AG04450 (cell line): ENCODE measurements at regions of chr6 and their contacts with region 1.

Region 1: DNA sequence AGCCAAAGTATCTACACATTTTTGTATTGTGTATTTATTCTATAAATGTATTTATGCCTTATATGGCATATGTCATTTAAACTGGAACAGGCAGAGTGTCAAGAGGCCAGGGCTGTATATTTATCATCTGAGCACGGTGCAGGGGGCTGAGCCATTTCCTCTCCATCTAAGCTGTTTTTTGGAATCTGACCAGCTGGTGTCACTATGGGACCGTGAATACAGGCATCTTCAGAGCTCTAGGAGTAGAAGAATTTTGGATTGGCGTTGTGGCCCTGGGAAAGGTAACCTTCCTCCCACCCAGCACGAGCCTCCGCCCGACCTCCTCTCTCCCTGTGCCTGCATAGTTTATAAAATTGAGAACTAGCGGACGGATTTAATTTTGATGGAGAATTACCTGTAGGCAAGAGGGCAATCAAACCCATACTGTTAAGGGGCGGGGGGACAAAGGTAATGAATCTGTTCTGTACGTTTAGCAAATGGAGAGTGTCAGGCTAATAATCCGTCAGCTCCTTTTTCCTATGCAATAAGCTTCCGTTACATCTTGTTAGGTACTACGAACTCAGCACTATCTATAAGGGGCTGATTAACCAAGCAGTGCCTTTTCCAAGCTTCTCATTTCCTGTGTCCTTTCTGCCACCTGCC is 29.0 kb upstream of the EEF1E1 start:
- DNase-seq: peak; percentile 39
- H3K4me3 ChIP-seq: no peak overlapping the region
- H3K27ac ChIP-seq: no peak overlapping the region
- H3K27me3 ChIP-seq: no peaks in the 10 kb centered on the region
- CTCF ChIP-seq: peak; percentile 71

Region 2: GRCh38 chr6:7859591-7859990 is 271.8 kb before region 1 on chr6:
- CTCF ChIA-PET with region 1: no interaction called
- POLR2A ChIA-PET with region 1: no interaction called
- DNase-seq: no peak
- H3K4me3 ChIP-seq: no peak overlapping the region
- H3K27ac ChIP-seq: no peak overlapping the region
- H3K27me3 ChIP-seq: no peaks in the 10 kb centered on the region
- CTCF ChIP-seq: no peak

Region 3: DNA sequence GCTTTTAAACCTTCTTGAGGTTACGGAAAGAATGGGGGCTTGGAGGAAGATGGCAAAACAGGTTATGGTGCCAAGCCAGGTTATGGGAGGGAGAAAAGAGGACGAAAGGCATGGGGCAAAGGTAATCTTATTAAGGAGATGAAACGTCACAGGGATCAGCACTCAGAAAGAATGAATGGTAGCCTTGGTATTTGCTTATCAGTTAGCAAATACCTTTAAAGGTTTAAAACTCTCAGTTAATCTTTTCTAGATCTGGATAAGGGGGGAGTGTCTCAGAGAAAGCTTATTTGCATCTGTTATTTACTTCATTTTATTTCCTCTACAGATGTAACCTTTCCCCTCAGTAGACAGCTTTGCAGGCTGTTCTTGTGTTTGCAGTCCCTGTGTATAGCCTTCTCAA is 26.5 kb after region 1 on chr6:
- CTCF ChIA-PET with region 1: interaction called, 12 read pairs
- POLR2A ChIA-PET with region 1: no interaction called
- DNase-seq: no peak
- H3K4me3 ChIP-seq: no peak overlapping the region
- H3K27ac ChIP-seq: no peak overlapping the region
- H3K27me3 ChIP-seq: no peaks in the 10 kb centered on the region
- CTCF ChIP-seq: no peak

Region 4: DNA sequence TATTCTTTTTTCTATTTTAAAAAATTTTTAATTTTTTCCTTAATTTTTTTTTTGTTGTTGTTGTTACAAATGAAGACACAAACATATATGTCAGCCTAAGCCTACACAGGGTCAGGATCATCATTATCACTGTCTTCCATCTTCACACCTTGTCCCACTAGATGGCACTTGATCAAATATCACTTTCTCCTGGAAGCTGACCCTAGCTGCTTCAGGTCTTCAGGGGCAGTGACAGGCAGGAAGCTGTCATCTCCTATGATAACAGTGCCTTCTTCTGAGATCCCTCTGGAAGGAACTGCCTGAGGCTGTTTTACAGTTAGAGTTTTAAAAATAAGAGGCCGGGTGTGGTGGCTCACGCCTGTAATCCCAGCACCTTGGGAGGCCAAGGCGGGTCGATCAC is 41.2 kb after region 1 on chr6:
- CTCF ChIA-PET with region 1: interaction called, 13 read pairs
- POLR2A ChIA-PET with region 1: interaction called, 5 read pairs
- DNase-seq: no peak
- H3K4me3 ChIP-seq: no peak overlapping the region
- H3K27ac ChIP-seq: no peak overlapping the region
- H3K27me3 ChIP-seq: no peaks in the 10 kb centered on the region
- CTCF ChIP-seq: no peak

Region 5: DNA sequence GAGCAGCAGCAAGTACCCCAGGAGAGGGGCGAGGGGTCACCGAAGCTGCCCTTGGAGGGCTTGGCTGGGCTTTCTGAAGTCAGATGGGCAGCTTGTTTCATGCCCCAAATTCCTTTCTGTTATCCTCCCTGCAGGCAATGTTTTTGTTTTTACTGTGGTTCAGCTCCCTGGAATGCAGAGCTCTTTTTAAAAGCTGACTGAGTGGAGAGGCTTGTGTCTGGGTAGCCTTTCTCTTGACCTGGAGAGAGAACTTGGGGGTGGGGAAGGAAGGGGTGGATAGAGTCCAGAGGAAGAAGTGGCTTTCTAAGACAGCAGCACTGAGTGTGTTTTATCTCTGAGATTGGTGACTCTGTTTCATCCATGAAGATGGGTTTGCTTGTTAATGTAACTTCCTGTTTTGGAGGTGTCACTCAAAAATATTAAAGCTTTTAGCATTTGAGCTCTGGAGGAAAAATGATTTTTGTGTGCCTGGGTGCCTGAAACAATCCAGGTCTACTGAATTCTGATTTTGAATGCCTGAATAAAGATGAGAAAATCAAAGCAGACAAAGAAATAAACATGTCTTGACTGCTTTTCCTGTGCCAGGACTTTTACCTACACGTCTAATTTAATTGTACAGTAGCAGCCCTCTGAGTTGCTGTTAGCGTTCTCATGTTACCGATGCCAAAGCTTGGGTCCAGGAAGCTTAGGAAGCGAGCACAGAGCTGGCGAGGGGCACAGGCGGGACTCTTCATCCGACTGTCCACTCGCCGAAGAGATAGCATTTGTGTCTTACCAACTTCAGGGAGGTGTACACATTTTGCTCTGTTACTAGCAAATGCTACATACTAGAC is 49.2 kb after region 1 on chr6:
- CTCF ChIA-PET with region 1: interaction called, 18 read pairs
- POLR2A ChIA-PET with region 1: no interaction called
- DNase-seq: peak; percentile 55
- H3K4me3 ChIP-seq: no peak overlapping the region; the same call in 1 of the 2 replicates
- H3K27ac ChIP-seq: peak overlapping the region; percentile 59
- H3K27me3 ChIP-seq: no peaks in the 10 kb centered on the region
- CTCF ChIP-seq: no peak

Region 6: GRCh38 chr6:8195040-8195713 is 63.8 kb after region 1 on chr6:
- CTCF ChIA-PET with region 1: interaction called, 17 read pairs
- POLR2A ChIA-PET with region 1: no interaction called
- DNase-seq: no peak
- H3K4me3 ChIP-seq: no peak overlapping the region
- H3K27ac ChIP-seq: no peak overlapping the region
- H3K27me3 ChIP-seq: no peaks in the 10 kb centered on the region
- CTCF ChIP-seq: no peak

Region 7: DNA sequence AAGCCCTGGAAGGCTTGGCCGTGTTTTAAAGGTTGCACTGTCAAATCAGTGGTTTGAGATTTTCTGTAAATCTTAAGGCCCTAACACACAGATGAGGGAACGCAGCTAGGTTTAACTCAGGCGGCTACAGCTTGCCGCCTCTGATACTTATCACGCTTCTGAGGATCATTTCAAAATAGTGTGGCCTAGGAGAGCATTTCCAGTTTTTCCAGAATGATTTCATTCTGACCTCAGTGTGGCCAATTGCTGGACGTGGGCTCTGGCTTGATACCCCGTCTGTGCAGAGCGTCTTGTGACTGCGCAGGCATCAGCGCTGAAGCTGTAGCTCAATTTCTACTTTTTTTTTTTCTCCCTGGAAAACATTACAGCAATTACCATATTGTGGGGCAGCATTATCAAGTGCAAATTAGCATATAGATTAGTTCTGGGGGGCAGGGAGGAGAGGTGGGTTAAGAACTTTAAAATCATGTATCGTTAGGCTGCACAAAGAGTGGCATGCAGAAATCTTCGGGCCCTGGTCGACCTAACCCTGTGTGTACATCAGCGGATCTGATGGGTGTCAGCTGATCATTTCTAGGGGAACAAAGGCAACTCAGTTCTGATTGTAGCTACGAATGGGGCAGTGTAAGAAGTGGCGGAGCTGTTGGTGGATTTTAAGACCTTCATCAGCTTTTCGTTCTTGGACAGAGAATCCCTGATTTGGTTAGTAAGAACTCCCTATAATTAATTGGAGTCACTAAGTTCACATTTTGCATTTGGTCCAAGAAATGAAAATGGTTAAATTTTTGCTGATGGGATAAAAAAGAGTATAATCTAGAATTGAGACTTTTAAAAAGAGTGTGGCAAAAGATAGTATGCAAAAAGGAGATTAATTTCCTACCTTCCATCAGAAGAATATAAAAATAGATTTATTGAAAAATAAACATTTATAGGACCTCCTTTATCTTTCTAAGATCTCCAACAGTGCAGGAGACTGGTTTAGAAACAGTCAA is 76.1 kb after region 1 on chr6:
- CTCF ChIA-PET with region 1: interaction called, 41 read pairs
- POLR2A ChIA-PET with region 1: no interaction called
- DNase-seq: no peak
- H3K4me3 ChIP-seq: no peak overlapping the region
- H3K27ac ChIP-seq: no peak overlapping the region
- H3K27me3 ChIP-seq: no peaks in the 10 kb centered on the region
- CTCF ChIP-seq: no peak

Region 8: GRCh38 chr6:8225113-8225512 is 93.7 kb after region 1 on chr6:
- CTCF ChIA-PET with region 1: interaction called, 945 read pairs
- POLR2A ChIA-PET with region 1: no interaction called
- DNase-seq: no peak
- H3K4me3 ChIP-seq: no peak overlapping the region
- H3K27ac ChIP-seq: no peak overlapping the region
- H3K27me3 ChIP-seq: no peaks in the 10 kb centered on the region
- CTCF ChIP-seq: no peak

Region 9: GRCh38 chr6:8315154-8315553 is 183.8 kb after region 1 on chr6:
- CTCF ChIA-PET with region 1: no interaction called
- POLR2A ChIA-PET with region 1: no interaction called
- DNase-seq: no peak
- H3K4me3 ChIP-seq: no peak overlapping the region
- H3K27ac ChIP-seq: no peak overlapping the region
- H3K27me3 ChIP-seq: no peaks in the 10 kb centered on the region
- CTCF ChIP-seq: no peak